Motor neuron (in vitro differentiated cells): ENCODE measurements at regions of chr6 and their contacts with region 1.

Region 1: GRCh38 chr6:5995949-5996713 is 10.6 kb downstream of the NRN1 start:
- ATAC-seq: peak; percentile 67 to 88 (median 85)
- H3K4me3 ChIP-seq: peak overlapping the region; percentile 32 to 48 (median 43)
- H3K27ac ChIP-seq: peak overlapping the region in 1 of 2 donors; percentile 13
- H3K4me1 ChIP-seq: peaks cover 0 to 12% of the 10 kb centered on the region in 2 donors

Region 2: GRCh38 chr6:5260661-5261544 is 735.2 kb before region 1 on chr6 and contains the starts of genes FARS2 and LYRM4:
- in situ Hi-C with region 1: loop called in 1 of 9 experiments (anchors 25 kb)
- ATAC-seq: peak; percentile 80 to 91 (median 88)
- H3K4me3 ChIP-seq: peak within 1 kb of the TSS; percentile 72 to 90 (median 85)
- H3K27ac ChIP-seq: peak within 1 kb of the TSS; percentile 100
- H3K4me1 ChIP-seq: peaks cover 9 to 10% of the 10 kb centered on the region in 2 donors
- total RNA-seq, gene FARS2: 10.9 to 24.1 (median 15.6) TPM
- total RNA-seq, gene LYRM4: 25.8 to 38.4 (median 32.7) TPM

Region 3: GRCh38 chr6:5471044-5471443 is 525.1 kb before region 1 on chr6:
- in situ Hi-C with region 1: loop called in 3 of 9 experiments (anchors 25 kb)
- ATAC-seq: peak; percentile 58 to 93 (median 68)
- H3K4me3 ChIP-seq: peak overlapping the region in 1 of 5 donors; percentile 15
- H3K27ac ChIP-seq: peak overlapping the region in 1 of 2 donors; percentile 60
- H3K4me1 ChIP-seq: peaks cover 28 to 30% of the 10 kb centered on the region in 2 donors